CD8-positive, alpha-beta T cell (primary cell): ENCODE measurements at regions of chr20 and their contacts with region 1.

Region 1: DNA sequence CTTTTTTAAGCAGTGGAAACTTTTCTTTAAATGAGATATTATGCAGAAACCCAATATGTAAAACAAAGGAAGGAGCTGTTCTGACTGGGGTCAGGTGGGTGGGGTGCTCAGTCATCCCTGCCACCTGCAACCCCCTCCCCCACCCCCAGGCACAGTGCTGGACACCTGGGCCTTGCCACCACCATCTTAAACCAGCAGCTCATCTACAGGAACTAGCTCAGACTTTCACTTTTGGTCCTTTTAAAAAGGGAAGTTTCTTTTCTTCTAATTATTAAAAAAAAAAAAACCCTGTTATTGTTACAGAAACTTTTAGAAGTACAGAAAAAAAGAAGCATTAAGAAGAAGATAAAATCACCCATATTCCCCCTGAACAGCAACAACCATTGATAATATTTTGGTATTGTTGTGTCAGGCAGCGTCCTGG is 37.1 kb downstream of the PPP1R16B start:
- DNase-seq: peak in 3 of 9 experiments; percentile 57 to 72 (median 58)
- ATAC-seq: peak; percentile 19
- H3K4me3 ChIP-seq: no peak overlapping the region
- H3K4me3 Mint-ChIP-seq: peak overlapping the region; percentile 64
- H3K27ac ChIP-seq: peak overlapping the region; percentile 35 to 95
- H3K27ac Mint-ChIP-seq: peak overlapping the region; percentile 96
- H3K4me1 ChIP-seq: peaks cover 58% of the 10 kb centered on the region
- H3K4me1 Mint-ChIP-seq: peaks cover 84% of the 10 kb centered on the region
- H3K27me3 ChIP-seq: no peaks in the 10 kb centered on the region
- H3K27me3 Mint-ChIP-seq: no peaks in the 10 kb centered on the region
- CTCF ChIP-seq: no peak

Region 2: GRCh38 chr20:38863024-38863851 is 20.7 kb after region 1 on chr20:
- CTCF ChIA-PET with region 1: interaction called, 3 read pairs
- POLR2A ChIA-PET with region 1: interaction called, 7 read pairs
- intact Hi-C with region 1: loop called in 1 of 2 experiments (anchors 2 kb)
- DNase-seq: peak in 6 of 9 experiments; percentile 42 to 89 (median 67)
- ATAC-seq: peak; percentile 80
- H3K4me3 ChIP-seq: no peak overlapping the region
- H3K4me3 Mint-ChIP-seq: peak overlapping the region; percentile 37
- H3K27ac ChIP-seq: peak overlapping the region in 1 of 2 experiments; percentile 58
- H3K27ac Mint-ChIP-seq: peak overlapping the region; percentile 87
- H3K4me1 ChIP-seq: peaks cover 29% of the 10 kb centered on the region
- H3K4me1 Mint-ChIP-seq: peaks cover 54% of the 10 kb centered on the region
- H3K27me3 ChIP-seq: no peaks in the 10 kb centered on the region
- H3K27me3 Mint-ChIP-seq: no peaks in the 10 kb centered on the region
- CTCF ChIP-seq: no peak

Region 3: GRCh38 chr20:40056166-40056565 is 1213.6 kb after region 1 on chr20:
- CTCF ChIA-PET with region 1: no interaction called
- POLR2A ChIA-PET with region 1: no interaction called
- intact Hi-C with region 1: no loop called
- DNase-seq: no peak
- ATAC-seq: no peak
- H3K4me3 ChIP-seq: no peak overlapping the region
- H3K4me3 Mint-ChIP-seq: no peak overlapping the region
- H3K27ac ChIP-seq: no peak overlapping the region
- H3K27ac Mint-ChIP-seq: no peak overlapping the region
- H3K4me1 ChIP-seq: no peaks in the 10 kb centered on the region
- H3K4me1 Mint-ChIP-seq: no peaks in the 10 kb centered on the region
- H3K27me3 ChIP-seq: no peaks in the 10 kb centered on the region
- H3K27me3 Mint-ChIP-seq: peaks cover 5% of the 10 kb centered on the region
- CTCF ChIP-seq: no peak